T-cell (primary cell): ENCODE measurements at regions of chr3 and their contacts with region 1.

Region 1: GRCh38 chr3:30199096-30199759 is 407.2 kb upstream of the TGFBR2 start:
- DNase-seq: peak; percentile 14 to 77 (median 55)
- ATAC-seq: peak in 2 of 4 experiments; percentile 44 to 45
- H3K4me3 ChIP-seq: no peak overlapping the region
- H3K4me3 Mint-ChIP-seq: no peak overlapping the region
- H3K27ac ChIP-seq: no peak overlapping the region
- H3K27ac Mint-ChIP-seq: no peak overlapping the region
- H3K4me1 ChIP-seq: no peaks in the 10 kb centered on the region
- H3K4me1 Mint-ChIP-seq: peaks cover 0 to 6% (median 5%) of the 10 kb centered on the region in 3 donors
- H3K27me3 ChIP-seq: no peaks in the 10 kb centered on the region
- H3K27me3 Mint-ChIP-seq: peaks cover 0 to 2% of the 10 kb centered on the region in 2 donors

Region 2: GRCh38 chr3:30012941-30013543 is 186.2 kb before region 1 on chr3:
- CTCF ChIA-PET with region 1: interaction called in 1 of 2 experiments, 11 read pairs
- POLR2A ChIA-PET with region 1: no interaction called
- DNase-seq: peak in 28 of 35 experiments; percentile 4 to 64 (median 28)
- ATAC-seq: no peak
- H3K4me3 ChIP-seq: no peak overlapping the region
- H3K4me3 Mint-ChIP-seq: no peak overlapping the region
- H3K27ac ChIP-seq: no peak overlapping the region
- H3K27ac Mint-ChIP-seq: no peak overlapping the region
- H3K4me1 ChIP-seq: no peaks in the 10 kb centered on the region
- H3K4me1 Mint-ChIP-seq: no peaks in the 10 kb centered on the region
- H3K27me3 ChIP-seq: no peaks in the 10 kb centered on the region
- H3K27me3 Mint-ChIP-seq: peaks cover 3 to 8% of the 10 kb centered on the region in 2 donors

Region 3: GRCh38 chr3:30042274-30042859 is 156.9 kb before region 1 on chr3:
- CTCF ChIA-PET with region 1: interaction called, 4 to 25 read pairs
- POLR2A ChIA-PET with region 1: interaction called in 1 of 2 experiments, 3 read pairs
- DNase-seq: peak in 34 of 35 experiments; percentile 16 to 76 (median 52)
- ATAC-seq: peak in 1 of 4 experiments; percentile 41
- H3K4me3 ChIP-seq: no peak overlapping the region
- H3K4me3 Mint-ChIP-seq: no peak overlapping the region
- H3K27ac ChIP-seq: no peak overlapping the region
- H3K27ac Mint-ChIP-seq: no peak overlapping the region
- H3K4me1 ChIP-seq: no peaks in the 10 kb centered on the region
- H3K4me1 Mint-ChIP-seq: no peaks in the 10 kb centered on the region
- H3K27me3 ChIP-seq: no peaks in the 10 kb centered on the region
- H3K27me3 Mint-ChIP-seq: peaks cover 19 to 22% of the 10 kb centered on the region in 2 donors

Region 4: GRCh38 chr3:30129765-30130164 is 69.5 kb before region 1 on chr3:
- CTCF ChIA-PET with region 1: no interaction called
- POLR2A ChIA-PET with region 1: no interaction called
- DNase-seq: no peak
- ATAC-seq: no peak
- H3K4me3 ChIP-seq: no peak overlapping the region
- H3K4me3 Mint-ChIP-seq: no peak overlapping the region
- H3K27ac ChIP-seq: no peak overlapping the region
- H3K27ac Mint-ChIP-seq: no peak overlapping the region
- H3K4me1 ChIP-seq: no peaks in the 10 kb centered on the region
- H3K4me1 Mint-ChIP-seq: peaks cover 0 to 4% (median 0%) of the 10 kb centered on the region in 3 donors
- H3K27me3 ChIP-seq: no peaks in the 10 kb centered on the region
- H3K27me3 Mint-ChIP-seq: no peaks in the 10 kb centered on the region

Region 5: GRCh38 chr3:30180310-30181177 is 18.7 kb before region 1 on chr3:
- CTCF ChIA-PET with region 1: interaction called, 5 to 10 read pairs
- POLR2A ChIA-PET with region 1: no interaction called
- DNase-seq: no peak
- ATAC-seq: no peak
- H3K4me3 ChIP-seq: no peak overlapping the region
- H3K4me3 Mint-ChIP-seq: no peak overlapping the region
- H3K27ac ChIP-seq: no peak overlapping the region
- H3K27ac Mint-ChIP-seq: no peak overlapping the region
- H3K4me1 ChIP-seq: no peaks in the 10 kb centered on the region
- H3K4me1 Mint-ChIP-seq: no peaks in the 10 kb centered on the region
- H3K27me3 ChIP-seq: no peaks in the 10 kb centered on the region
- H3K27me3 Mint-ChIP-seq: peaks cover 1 to 4% of the 10 kb centered on the region in 2 donors